A549 (cell line): ENCODE measurements at regions of chr2 and their contacts with region 1.

Region 1: GRCh38 chr2:44167940-44168680 is 565 bp upstream of the PPM1B start:
- DNase-seq: peak; percentile 99 to 100
- ATAC-seq: peak; percentile 87 to 93
- H3K4me3 ChIP-seq: peak overlapping the region; percentile 49
- H3K27ac ChIP-seq: peak overlapping the region; percentile 75 to 82
- H3K4me1 ChIP-seq: peaks cover 26% of the 10 kb centered on the region
- CTCF ChIP-seq: no peak
- EP300 ChIP-seq: no peak
- POLR2A ChIP-seq: no peak; the same call in 1 of the 2 replicates
- RAD21 ChIP-seq: no peak

Region 2: GRCh38 chr2:44155666-44156446 is 12.3 kb before region 1 on chr2:
- CTCF ChIA-PET with region 1: interaction called, 10 read pairs
- POLR2A ChIA-PET with region 1: interaction called, 6 read pairs
- DNase-seq: no peak
- ATAC-seq: peak in 1 of 2 experiments; percentile 24; a peak in 1 of 6 replicates
- H3K4me3 ChIP-seq: no peak overlapping the region
- H3K27ac ChIP-seq: no peak overlapping the region
- H3K4me1 ChIP-seq: no peaks in the 10 kb centered on the region
- CTCF ChIP-seq: no peak
- EP300 ChIP-seq: no peak
- POLR2A ChIP-seq: no peak
- RAD21 ChIP-seq: no peak